HepG2 (cell line): ENCODE measurements at regions of chr16 and their contacts with region 1.

Region 1: DNA sequence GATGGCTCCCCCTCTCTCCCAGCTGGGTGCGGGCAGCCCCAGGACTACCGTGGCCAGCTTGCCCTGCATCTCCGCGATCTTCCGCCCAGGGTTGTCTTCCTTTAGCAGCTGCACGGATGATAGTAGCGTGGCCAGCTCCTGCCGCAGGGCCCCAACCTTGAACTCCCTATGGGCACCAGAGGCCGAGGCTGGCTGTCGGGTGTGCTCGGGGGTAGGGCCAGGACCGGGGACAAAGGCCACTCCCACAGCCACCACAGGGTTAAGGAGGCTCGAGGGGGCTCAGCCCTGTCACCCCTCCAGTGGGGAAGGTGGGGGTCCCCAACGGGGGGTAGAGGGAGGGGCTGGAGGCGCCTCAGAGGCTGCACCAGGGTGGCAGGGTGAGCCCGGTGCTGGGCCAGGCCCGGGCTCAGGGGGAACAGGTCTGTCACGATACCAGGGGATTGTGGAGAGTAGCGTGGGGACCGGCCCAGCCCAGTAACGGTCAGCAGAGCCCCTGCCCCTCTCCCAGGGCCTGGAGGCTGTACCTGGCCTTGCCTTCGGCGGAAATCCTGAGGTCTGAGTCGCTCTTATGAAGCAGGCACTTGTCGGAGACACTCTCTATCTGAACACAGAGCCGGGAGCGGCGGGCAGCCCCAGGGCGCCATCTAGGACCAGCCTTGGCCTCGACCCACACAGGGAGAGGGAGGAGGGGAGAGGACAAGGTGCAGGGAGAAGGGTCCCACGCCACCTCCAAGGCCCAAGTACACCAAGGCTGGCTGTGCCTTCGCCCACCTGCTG is 5.2 kb downstream of the PERCC1 start:
- DNase-seq: peak; percentile 51
- ATAC-seq: peak; percentile 75
- H3K4me3 ChIP-seq: peak overlapping the region; percentile 63 to 78 (median 69)
- H3K27ac ChIP-seq: peak overlapping the region; percentile 63
- H3K4me1 ChIP-seq: peaks cover 65% of the 10 kb centered on the region
- H3K27me3 ChIP-seq: peaks cover 8 to 37% of the 10 kb centered on the region in 2 experiments; a peak in 4 of 5 replicates
- CTCF ChIP-seq: peak; percentile 88
- EP300 ChIP-seq: no peak
- POLR2A ChIP-seq: peak; percentile 50 to 64
- RAD21 ChIP-seq: no peak

Region 2: GRCh38 chr16:1420111-1420540 is 16.0 kb before region 1 on chr16:
- CTCF ChIA-PET with region 1: no interaction called
- POLR2A ChIA-PET with region 1: interaction called, 47 read pairs
- in situ Hi-C with region 1: no loop called
- intact Hi-C with region 1: no loop called
- DNase-seq: no peak
- ATAC-seq: peak; percentile 44
- H3K4me3 ChIP-seq: peak overlapping the region; percentile 94 to 100 (median 95)
- H3K27ac ChIP-seq: peak overlapping the region; percentile 82
- H3K4me1 ChIP-seq: peaks cover 29% of the 10 kb centered on the region
- H3K27me3 ChIP-seq: no peaks in the 10 kb centered on the region; a peak in 1 of 5 replicates
- CTCF ChIP-seq: no peak
- EP300 ChIP-seq: no peak
- POLR2A ChIP-seq: no peak
- RAD21 ChIP-seq: no peak

Region 3: DNA sequence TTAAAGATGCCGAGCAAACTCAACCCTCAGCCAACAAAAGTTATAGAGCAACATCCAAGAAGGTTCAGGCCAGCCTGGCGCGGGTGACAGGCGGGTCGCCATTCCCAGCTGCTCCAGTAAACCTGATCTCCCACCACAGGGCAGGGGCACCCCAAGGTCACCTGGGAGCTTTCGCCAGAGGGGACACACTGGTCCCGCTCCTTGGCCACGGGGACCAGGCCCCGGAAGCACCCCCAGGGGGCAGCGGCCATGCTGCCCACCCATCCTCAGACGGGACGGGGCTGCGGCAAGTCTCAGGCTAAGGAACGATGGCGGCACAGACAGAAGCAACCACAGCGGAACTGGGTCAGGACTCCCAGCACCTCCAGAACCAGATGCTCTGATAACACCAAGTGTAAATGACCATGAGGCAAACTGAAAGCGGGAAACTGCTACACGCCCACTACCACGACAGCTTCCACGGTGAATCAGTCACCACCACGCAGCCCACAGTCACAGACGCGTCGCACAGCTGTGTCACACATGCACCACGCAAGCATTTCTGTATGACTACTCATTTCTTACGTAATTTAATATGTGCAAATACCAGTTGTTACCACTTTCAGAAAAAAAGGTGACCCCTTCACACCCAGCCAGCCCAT is 22.3 kb after region 1 on chr16:
- CTCF ChIA-PET with region 1: no interaction called
- POLR2A ChIA-PET with region 1: no interaction called
- in situ Hi-C with region 1: no loop called
- intact Hi-C with region 1: no loop called
- DNase-seq: no peak
- ATAC-seq: no peak
- H3K4me3 ChIP-seq: no peak overlapping the region
- H3K27ac ChIP-seq: no peak overlapping the region
- H3K4me1 ChIP-seq: no peaks in the 10 kb centered on the region
- H3K27me3 ChIP-seq: no peaks in the 10 kb centered on the region
- CTCF ChIP-seq: no peak
- EP300 ChIP-seq: no peak
- POLR2A ChIP-seq: no peak
- RAD21 ChIP-seq: no peak